Esophagus muscularis mucosa (tissue), 4 donors: ENCODE measurements at regions of chr2 and their contacts with region 1.

Region 1: DNA sequence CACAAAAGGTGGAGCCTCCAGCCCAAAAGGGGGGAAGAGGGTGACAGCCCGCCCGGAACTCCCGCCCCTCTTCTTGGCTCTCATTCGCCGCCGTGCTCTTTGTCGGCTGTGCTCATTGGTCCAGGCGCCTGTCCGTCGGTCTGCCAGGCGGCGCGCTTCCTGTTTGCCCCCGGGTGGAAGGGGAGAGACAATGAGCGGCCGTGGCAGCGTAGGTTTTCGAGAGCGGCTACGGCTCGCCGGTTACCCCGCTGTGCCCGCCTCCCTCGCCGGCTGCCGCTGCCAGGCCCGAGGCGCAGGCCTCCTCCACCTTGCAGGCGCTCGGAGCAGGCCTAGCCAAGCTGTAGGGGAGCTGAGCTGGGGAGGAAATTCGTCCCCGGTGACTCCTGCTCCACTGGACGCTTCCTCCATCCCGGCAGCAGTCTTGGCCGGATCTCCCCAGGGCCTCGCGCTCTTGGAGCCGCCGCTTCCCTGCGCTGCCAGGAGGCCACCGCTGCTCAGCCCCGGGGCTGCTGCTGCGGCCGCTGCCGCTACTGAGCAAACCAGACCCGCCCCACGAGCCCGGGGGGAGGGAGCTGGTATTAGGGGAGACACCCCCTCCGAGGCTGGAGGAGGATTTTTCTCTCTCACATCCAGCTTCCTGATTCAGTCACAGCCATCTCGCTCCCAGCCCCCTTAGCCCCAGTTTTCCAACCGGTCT is at the start of gene SP3:
- DNase-seq: peak; percentile 99
- H3K4me3 ChIP-seq: peak within 1 kb of the TSS; percentile 98 to 100 (median 99)
- H3K27ac ChIP-seq: peak within 1 kb of the TSS; percentile 100
- H3K4me1 ChIP-seq: peaks cover 28 to 36% (median 31%) of the 10 kb centered on the region in 4 donors
- H3K27me3 ChIP-seq: no peaks in the 10 kb centered on the region
- CTCF ChIP-seq: no peak
- EP300 ChIP-seq: no peak
- POLR2A ChIP-seq: peak; percentile 77
- total RNA-seq, gene SP3: 78.7 to 102 (median 92.2) TPM

Region 2: DNA sequence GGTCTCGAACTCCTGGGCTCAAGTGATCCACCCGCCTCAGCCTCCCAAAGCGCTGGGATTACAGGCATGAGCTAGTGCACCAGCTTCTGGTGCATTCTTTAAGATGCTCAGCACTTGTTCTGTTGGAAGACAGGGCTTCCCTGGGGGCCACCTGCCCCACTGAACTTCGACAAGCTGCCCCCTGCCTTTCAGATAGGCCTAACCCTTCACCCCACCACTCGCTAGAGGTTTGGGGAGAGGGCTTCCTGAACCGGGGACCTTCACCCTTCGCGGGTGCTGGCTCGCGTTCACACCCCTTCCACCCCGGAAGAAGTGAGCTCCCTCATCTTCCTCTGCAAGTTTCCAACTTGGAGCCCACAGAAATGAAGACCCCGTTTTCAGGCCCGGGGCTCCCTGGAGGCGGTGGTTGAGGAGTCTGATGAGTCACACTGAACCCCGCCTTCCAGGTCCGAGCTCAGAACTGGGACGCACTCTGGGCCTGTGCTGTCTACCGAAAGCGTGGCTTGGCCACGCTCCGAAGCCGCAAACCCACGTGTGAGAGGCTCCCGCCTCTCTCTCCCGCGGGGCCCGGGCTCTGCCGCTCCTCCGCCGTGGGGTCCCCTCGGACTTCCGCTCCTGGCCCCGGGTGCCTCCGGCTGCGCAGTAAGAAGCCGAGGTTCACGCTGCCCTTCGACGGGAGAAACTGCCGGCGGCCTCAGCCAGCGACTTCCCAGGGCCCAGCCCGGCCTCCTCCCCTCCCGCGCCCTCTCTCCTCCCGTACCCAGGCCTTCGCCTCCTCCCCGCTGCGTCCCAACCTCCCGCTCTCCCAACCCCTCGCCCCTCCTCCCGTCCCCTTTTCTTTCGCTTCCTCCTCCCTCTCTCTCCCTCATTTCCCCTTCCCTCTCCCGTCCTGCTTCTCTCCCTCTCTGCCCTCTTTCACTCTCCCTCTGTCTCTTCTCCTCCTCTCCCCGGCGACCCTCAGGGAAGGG is 47.2 kb after region 1 on chr2:
- intact Hi-C with region 1: loop called (anchors 10 kb)
- DNase-seq: peak; percentile 94
- H3K4me3 ChIP-seq: peak overlapping the region; percentile 61 to 67 (median 64)
- H3K27ac ChIP-seq: peak overlapping the region; percentile 87 to 92 (median 89)
- H3K4me1 ChIP-seq: peaks cover 26 to 34% (median 32%) of the 10 kb centered on the region in 4 donors
- H3K27me3 ChIP-seq: no peaks in the 10 kb centered on the region
- CTCF ChIP-seq: no peak
- EP300 ChIP-seq: no peak
- POLR2A ChIP-seq: peak; percentile 20

Region 3: DNA sequence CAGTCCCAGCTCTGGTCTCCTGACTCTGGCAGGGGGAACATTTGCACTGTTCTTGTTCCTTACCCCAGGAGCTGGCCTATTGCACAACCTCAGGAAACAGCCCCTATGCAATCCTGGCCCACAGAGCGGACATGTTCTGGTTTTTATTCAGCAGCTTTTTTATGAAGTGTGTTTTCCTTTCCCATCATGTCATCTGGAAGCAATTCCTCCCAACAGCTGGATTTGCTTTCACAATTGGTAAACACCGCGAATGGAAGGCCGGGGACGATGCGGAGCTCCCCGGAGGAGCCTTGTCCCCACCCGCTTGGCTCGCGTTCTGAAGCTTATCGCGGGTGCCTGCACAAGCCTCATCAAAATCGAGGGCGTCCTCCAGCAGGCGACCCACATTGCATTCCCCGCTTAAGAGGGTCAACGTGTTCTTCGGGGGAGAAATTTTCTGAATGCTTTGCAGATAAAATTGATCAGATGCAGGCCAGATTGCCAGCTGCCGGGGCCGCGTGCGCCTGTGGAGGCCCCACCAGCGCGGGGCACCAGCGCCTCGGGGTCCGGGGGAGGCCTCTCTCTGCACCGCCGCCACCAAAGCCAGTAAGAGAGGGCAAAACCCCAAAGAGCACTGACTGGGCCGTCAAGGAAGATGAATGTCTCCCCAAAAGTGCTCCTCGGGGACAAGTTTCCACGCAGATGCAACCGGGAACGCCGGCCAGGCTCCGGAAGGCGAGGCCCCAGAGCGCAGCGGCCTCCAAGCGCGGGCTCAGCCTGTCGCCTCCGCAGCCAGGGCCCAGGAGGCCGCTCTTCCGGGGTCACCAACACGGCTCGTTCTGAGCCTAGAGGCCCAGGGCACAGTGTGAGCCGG is 60.0 kb after region 1 on chr2:
- intact Hi-C with region 1: no loop called
- DNase-seq: peak; percentile 96
- H3K4me3 ChIP-seq: peak overlapping the region; percentile 7 to 32 (median 10)
- H3K27ac ChIP-seq: peak overlapping the region; percentile 65 to 72 (median 68)
- H3K4me1 ChIP-seq: peaks cover 33 to 44% (median 35%) of the 10 kb centered on the region in 4 donors
- H3K27me3 ChIP-seq: no peaks in the 10 kb centered on the region
- CTCF ChIP-seq: no peak
- EP300 ChIP-seq: no peak
- POLR2A ChIP-seq: no peak

Region 4: DNA sequence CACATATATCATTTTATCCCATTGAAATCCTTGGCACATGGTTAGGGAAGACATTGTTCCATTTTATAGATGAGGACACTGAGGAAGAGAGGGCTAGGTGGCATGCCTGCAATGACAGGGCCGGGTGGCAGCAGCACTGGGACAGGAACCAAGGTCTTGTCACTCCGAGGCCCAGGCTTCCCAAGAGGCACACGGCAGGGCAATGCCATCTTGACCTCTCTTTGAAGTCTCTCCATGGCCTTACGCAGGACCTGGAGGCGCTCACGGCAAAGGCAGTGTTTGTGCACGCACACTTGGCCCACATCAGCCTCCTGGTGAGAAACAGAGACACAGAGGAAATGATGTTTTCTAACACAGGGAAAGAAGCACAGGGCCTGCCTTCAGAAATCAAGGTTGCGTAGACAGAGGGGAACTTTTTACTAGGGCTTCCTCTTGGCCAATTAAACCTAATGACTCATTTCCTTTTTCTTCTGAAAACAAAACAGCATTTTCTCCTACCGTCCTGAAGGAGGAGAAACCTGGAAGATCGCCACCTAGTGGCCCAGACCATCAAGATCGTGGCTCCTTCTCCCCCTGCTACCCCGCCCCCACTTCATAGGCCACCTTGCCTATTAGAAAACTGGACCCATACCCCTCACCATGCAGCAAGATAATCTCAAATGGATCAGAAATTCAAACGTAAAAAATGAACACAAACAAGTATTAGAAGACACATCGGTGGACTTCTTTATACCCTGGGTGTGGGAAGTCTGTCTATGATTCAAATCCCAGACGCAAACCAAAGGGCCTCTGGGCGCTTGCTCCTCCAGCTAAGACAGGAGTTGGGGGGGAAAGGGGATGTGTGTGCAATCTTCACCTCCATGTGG is 74.3 kb after region 1 on chr2:
- intact Hi-C with region 1: loop called (anchors 5 kb)
- DNase-seq: peak; percentile 95
- H3K4me3 ChIP-seq: peak overlapping the region; percentile 20 to 37 (median 33)
- H3K27ac ChIP-seq: peak overlapping the region; percentile 65 to 78 (median 75)
- H3K4me1 ChIP-seq: peaks cover 6 to 24% (median 12%) of the 10 kb centered on the region in 4 donors
- H3K27me3 ChIP-seq: no peaks in the 10 kb centered on the region
- CTCF ChIP-seq: peak; percentile 81 to 84 (median 83)
- EP300 ChIP-seq: no peak
- POLR2A ChIP-seq: no peak

Region 5: DNA sequence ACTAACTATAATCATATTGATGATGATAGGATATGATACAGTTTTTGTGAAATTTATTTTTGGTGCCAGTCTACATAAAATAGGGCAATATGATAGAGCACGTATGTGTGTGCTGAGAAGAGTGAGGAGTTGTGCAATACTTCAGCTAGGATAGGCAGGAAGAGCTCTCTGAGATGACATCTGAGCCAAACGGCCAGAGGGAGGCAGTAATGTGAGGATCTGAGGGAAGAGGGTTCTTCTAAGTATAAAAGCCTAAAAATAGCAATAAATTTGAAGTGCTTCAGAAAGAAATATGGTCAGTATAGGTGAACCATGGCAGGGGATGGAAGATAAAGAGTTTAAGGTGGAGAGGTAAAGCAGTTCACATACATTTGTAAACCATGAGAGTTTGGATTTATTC is 180.3 kb after region 1 on chr2:
- intact Hi-C with region 1: no loop called
- DNase-seq: no peak
- H3K4me3 ChIP-seq: no peak overlapping the region
- H3K27ac ChIP-seq: no peak overlapping the region
- H3K4me1 ChIP-seq: peaks cover 0 to 4% (median 0%) of the 10 kb centered on the region in 4 donors
- H3K27me3 ChIP-seq: no peaks in the 10 kb centered on the region
- CTCF ChIP-seq: no peak
- EP300 ChIP-seq: no peak
- POLR2A ChIP-seq: no peak